ENCODE measurements at regions of chr6 and their contacts with region 1.

Region 1: DNA sequence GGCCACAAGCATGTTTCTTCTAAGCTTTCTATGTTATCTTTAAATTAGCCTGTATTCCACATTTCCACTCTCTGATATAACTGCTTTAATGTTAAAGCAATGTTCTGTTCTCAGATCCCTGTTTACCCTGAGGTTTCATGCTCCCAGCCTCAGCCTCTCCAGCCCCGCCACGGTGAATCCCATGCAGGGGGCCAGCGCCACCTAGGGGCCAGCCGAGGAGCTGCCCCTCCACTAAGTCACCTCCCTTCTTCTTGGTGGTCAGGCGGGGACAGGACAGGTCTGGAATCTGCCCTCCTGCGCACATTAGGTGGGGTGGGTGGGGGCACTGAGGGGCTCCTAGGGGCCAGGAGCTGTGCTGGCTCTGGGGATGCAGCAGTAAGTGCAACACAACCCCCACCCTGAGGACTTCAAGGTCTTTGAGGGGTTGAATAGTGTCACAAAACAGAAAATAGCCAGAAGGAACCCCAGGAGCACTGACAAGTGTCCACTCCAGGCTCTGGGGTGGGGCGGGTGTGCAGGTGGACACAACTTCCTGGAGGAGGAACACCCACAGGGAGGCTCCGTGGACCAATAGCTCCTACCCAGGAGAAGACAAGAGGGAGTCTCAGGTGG is 61.6 kb downstream of the RAB44 start:
- DNase-seq: peak; percentile 89
- H3K4me3 Mint-ChIP-seq: no peak overlapping the region
- H3K27ac Mint-ChIP-seq: peak overlapping the region; percentile 11
- H3K4me1 Mint-ChIP-seq: peaks cover 40% of the 10 kb centered on the region
- H3K27me3 Mint-ChIP-seq: no peaks in the 10 kb centered on the region

Region 2: DNA sequence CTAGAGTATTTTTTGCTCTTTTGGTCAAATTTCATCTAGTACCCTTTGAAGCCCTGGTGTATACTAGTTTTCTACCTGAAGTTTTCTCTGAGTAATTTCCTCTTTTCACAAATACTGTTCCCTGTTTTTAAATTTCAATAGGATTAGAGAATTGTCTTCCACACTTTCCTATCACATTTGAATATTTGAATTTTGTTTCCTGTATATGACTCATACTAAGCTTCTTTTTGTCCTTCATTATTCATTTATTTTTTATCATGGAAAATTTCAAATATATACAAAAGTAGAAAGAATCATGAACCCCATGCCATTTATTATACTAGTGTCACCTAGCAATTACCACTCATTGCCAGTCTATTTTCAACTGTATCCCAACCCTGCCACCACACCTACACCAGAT is 901.4 kb before region 1 on chr6:
- CTCF ChIA-PET with region 1: no interaction called
- POLR2A ChIA-PET with region 1: no interaction called
- intact Hi-C with region 1: no loop called
- DNase-seq: no peak
- H3K4me3 Mint-ChIP-seq: no peak overlapping the region
- H3K27ac Mint-ChIP-seq: no peak overlapping the region
- H3K4me1 Mint-ChIP-seq: peaks cover 2% of the 10 kb centered on the region
- H3K27me3 Mint-ChIP-seq: no peaks in the 10 kb centered on the region

Region 3: DNA sequence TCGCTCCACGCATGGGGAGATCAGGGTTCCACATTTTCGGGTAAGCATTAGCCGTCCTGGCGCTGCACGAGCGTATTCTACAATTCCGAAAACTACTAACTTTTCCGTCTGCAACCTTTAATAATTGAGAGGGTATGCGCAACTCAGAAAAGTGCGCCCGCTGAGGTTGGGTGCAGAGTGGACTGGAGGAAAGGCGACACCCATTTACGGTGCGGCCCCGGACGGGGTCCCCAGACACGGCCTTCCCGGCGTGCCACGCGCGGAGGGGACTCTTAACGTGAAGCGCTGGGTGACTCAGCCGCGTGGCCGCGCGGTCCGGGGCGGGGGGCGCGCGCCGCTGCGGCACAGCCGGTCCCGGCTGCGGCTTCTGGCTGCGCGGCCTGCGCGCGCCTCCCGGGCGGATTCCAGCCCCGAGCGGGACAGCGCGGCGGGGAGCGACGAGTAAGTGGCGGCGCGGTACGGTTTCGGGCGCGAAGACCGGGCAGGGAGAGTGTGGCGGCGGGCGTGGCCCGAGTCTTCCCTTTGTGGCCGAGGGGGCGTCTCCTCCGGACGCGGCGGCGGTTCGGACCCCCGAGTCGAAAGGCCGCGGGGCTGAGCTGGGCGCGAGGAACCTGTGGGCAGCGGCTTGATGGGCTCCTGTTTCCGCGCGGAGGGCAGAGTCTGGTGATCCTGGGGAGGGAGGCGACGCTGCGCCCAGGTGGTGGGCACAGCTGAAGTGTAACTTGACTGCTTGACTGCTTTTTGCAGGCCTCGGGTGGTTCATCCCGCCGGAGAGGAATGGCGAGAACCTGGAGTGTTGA is 316.4 kb before region 1 on chr6 and contains the starts of genes KCTD20 and PXT1:
- CTCF ChIA-PET with region 1: no interaction called
- POLR2A ChIA-PET with region 1: no interaction called
- intact Hi-C with region 1: loop called (anchors 5 kb)
- DNase-seq: peak; percentile 93
- H3K4me3 Mint-ChIP-seq: peak within 1 kb of the TSS; percentile 97
- H3K27ac Mint-ChIP-seq: peak within 1 kb of the TSS; percentile 97
- H3K4me1 Mint-ChIP-seq: peaks cover 34% of the 10 kb centered on the region
- H3K27me3 Mint-ChIP-seq: no peaks in the 10 kb centered on the region
- total RNA-seq, gene KCTD20: 48.0 to 51.0 TPM
- total RNA-seq, gene PXT1: 0.22 to 0.29 TPM

Region 4: GRCh38 chr6:36678518-36679027 is 80.7 kb before region 1 on chr6 and contains the start of gene CDKN1A:
- CTCF ChIA-PET with region 1: interaction called, 59 read pairs
- POLR2A ChIA-PET with region 1: interaction called, 13 read pairs
- intact Hi-C with region 1: loop called (anchors 1 kb)
- DNase-seq: peak; percentile 84
- H3K4me3 Mint-ChIP-seq: peak within 1 kb of the TSS; percentile 98
- H3K27ac Mint-ChIP-seq: peak within 1 kb of the TSS; percentile 95
- H3K4me1 Mint-ChIP-seq: peaks cover 48% of the 10 kb centered on the region
- H3K27me3 Mint-ChIP-seq: peaks cover 4% of the 10 kb centered on the region
- total RNA-seq, gene CDKN1A: 64.2 to 66.7 TPM

Region 5: DNA sequence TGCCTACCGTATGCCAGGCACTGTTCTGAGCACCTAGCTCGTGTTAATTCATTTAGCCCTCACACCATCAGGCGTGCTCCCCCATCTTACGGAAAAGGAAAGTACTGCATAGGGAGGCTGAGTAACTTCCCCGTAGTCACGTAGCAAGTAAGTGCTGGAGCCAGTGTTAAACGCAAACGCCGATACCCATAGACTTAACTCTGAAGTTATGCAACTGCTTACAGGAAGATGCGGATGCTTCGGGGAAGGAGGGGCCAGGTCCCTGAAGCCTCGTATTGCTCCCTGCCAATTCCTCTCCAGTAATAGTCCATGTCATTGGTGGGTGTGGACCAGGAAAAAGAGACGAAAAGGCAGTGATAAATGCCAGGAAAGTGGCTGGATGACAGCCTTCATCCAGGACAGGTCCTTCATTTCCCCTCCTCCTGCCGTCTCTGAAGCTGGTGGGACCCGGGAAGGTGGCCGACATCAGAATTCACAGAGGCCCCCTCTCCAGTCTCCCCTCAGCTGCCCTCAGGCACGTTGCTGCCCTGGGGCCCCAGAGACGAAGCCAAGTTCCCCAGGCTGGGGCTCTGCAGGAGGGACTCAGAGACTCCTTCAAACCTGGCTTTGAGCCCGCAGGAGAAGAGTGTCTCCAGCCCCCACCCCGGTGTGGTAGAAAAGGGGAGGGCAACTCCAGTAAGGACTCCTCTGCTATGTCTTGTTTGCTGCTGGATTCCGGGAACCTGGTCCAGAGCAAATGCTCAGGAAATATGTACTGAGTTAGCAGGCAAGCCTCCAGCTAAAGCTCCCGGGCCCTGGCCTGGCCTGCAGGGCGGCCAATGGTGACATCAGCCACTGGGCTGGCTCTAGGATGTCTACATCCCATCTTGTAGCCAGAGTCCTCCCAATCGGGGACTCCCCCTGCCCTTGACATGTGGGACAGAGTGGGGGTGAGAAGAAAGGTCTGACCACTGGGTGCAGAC is 23.9 kb before region 1 on chr6:
- CTCF ChIA-PET with region 1: interaction called, 19 read pairs
- POLR2A ChIA-PET with region 1: no interaction called
- intact Hi-C with region 1: no loop called
- DNase-seq: peak; percentile 55
- H3K4me3 Mint-ChIP-seq: peak overlapping the region; percentile 31
- H3K27ac Mint-ChIP-seq: peak overlapping the region; percentile 50
- H3K4me1 Mint-ChIP-seq: peaks cover 11% of the 10 kb centered on the region
- H3K27me3 Mint-ChIP-seq: no peaks in the 10 kb centered on the region

Region 6: GRCh38 chr6:36874443-36875249 is 115.4 kb after region 1 on chr6 and contains the start of gene PPIL1:
- CTCF ChIA-PET with region 1: interaction called, 14 read pairs
- POLR2A ChIA-PET with region 1: no interaction called
- intact Hi-C with region 1: no loop called
- DNase-seq: peak; percentile 88
- H3K4me3 Mint-ChIP-seq: peak within 1 kb of the TSS; percentile 98
- H3K27ac Mint-ChIP-seq: peak within 1 kb of the TSS; percentile 99
- H3K4me1 Mint-ChIP-seq: peaks cover 40% of the 10 kb centered on the region
- H3K27me3 Mint-ChIP-seq: peaks cover 2% of the 10 kb centered on the region
- total RNA-seq, gene PPIL1: 38.5 to 40.6 TPM

Measured in activated CD4-positive, alpha-beta memory T cell treated with anti-CD3 and anti-CD28 coated beads for 36 hours (primary cell).